Esophagus muscularis mucosa (tissue), 4 donors: ENCODE measurements at regions of chr9 and their contacts with region 1.

Region 1: GRCh38 chr9:130343445-130343918 is 77.9 kb downstream of the HMCN2 start:
- DNase-seq: no peak
- H3K4me3 ChIP-seq: no peak overlapping the region
- H3K27ac ChIP-seq: no peak overlapping the region
- H3K4me1 ChIP-seq: peaks cover 0 to 21% (median 15%) of the 10 kb centered on the region in 4 donors
- H3K27me3 ChIP-seq: no peaks in the 10 kb centered on the region
- CTCF ChIP-seq: peak; percentile 87 to 91 (median 89)
- EP300 ChIP-seq: no peak
- POLR2A ChIP-seq: no peak

Region 2: DNA sequence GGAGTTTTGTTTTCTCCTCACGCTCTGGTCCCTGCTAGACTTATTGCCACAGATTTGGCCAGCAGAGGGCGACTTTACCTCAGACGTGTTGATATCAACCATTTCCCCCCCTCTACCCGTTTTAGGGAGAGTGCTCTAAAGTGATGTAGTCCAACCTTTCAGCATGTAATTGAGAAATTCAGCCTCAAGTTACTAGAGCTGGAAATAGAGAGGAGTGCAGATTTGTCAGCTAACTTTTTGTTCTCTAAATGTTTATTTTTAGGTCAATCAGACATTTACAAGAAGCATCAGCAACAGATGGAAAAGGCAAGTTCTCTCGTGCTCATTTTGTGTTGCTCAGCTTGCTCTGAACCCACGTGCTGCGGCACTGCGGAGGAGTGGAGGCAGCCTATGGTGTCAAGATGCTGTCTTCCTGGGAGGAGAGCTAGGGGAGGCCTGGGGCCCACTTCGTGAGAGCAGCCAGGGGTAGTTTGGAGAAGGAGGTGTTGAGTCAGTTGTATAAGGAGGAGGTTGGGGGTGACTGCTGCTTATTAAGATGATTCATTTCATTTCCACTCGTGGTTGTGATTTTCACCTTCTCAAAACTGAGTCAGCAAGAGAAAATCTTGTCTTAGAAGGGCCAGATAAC is 236.1 kb before region 1 on chr9:
- intact Hi-C with region 1: loop called (anchors 2 kb)
- DNase-seq: peak; percentile 95
- H3K4me3 ChIP-seq: no peak overlapping the region
- H3K27ac ChIP-seq: peak overlapping the region; percentile 64 to 79 (median 70)
- H3K4me1 ChIP-seq: peaks cover 0 to 34% (median 18%) of the 10 kb centered on the region in 4 donors
- H3K27me3 ChIP-seq: no peaks in the 10 kb centered on the region
- CTCF ChIP-seq: peak; percentile 80 to 86 (median 84)
- EP300 ChIP-seq: no peak
- POLR2A ChIP-seq: no peak

Region 3: GRCh38 chr9:130243015-130243734 is 100.3 kb before region 1 on chr9:
- intact Hi-C with region 1: loop called (anchors 5 kb)
- DNase-seq: no peak
- H3K4me3 ChIP-seq: peak overlapping the region; percentile 27 to 48 (median 32)
- H3K27ac ChIP-seq: no peak overlapping the region
- H3K4me1 ChIP-seq: peaks cover 7 to 25% (median 22%) of the 10 kb centered on the region in 4 donors
- H3K27me3 ChIP-seq: no peaks in the 10 kb centered on the region
- CTCF ChIP-seq: peak; percentile 90 to 97 (median 94)
- EP300 ChIP-seq: no peak
- POLR2A ChIP-seq: no peak

Region 4: GRCh38 chr9:130263601-130264413 is 79.7 kb before region 1 on chr9:
- intact Hi-C with region 1: loop called (anchors 5 kb)
- DNase-seq: no peak
- H3K4me3 ChIP-seq: no peak overlapping the region
- H3K27ac ChIP-seq: peak overlapping the region in 2 of 4 donors; percentile 78 to 87
- H3K4me1 ChIP-seq: peaks cover 10 to 75% (median 67%) of the 10 kb centered on the region in 4 donors
- H3K27me3 ChIP-seq: peaks cover 0 to 15% (median 0%) of the 10 kb centered on the region in 4 donors
- CTCF ChIP-seq: peak; percentile 14 to 45 (median 24)
- EP300 ChIP-seq: no peak
- POLR2A ChIP-seq: no peak

Region 5: GRCh38 chr9:130467371-130467770 is 123.9 kb after region 1 on chr9:
- intact Hi-C with region 1: no loop called
- DNase-seq: no peak
- H3K4me3 ChIP-seq: no peak overlapping the region
- H3K27ac ChIP-seq: no peak overlapping the region
- H3K4me1 ChIP-seq: no peaks in the 10 kb centered on the region
- H3K27me3 ChIP-seq: no peaks in the 10 kb centered on the region
- CTCF ChIP-seq: no peak
- EP300 ChIP-seq: no peak
- POLR2A ChIP-seq: no peak

Region 6: GRCh38 chr9:130578865-130579737 is 235.6 kb after region 1 on chr9 and contains the start of gene FUBP3:
- intact Hi-C with region 1: no loop called
- DNase-seq: peak; percentile 97
- H3K4me3 ChIP-seq: peak within 1 kb of the TSS; percentile 79 to 99 (median 88)
- H3K27ac ChIP-seq: peak within 1 kb of the TSS; percentile 85 to 94 (median 88)
- H3K4me1 ChIP-seq: peaks cover 28 to 47% (median 39%) of the 10 kb centered on the region in 4 donors
- H3K27me3 ChIP-seq: no peaks in the 10 kb centered on the region
- CTCF ChIP-seq: peak in 1 of 3 experiments; percentile 4
- EP300 ChIP-seq: no peak
- POLR2A ChIP-seq: peak; percentile 79
- total RNA-seq, gene FUBP3: 40.6 to 64.8 (median 46.4) TPM